Activated T-helper 1 cell treated with anti-CD3 and anti-CD28 coated beads, Interleukin-12 subunit alpha, Interleukin-12 subunit beta, Interleukin-2, Interleukin-4 antibody, amounts not matched to agents 30 ng/mL and 10 ng/mL and 1 ng/mL, durations not matched to agents 14 hours and 24 hours and 36 hours (primary cell): ENCODE measurements at regions of chr14 and their contacts with region 1.

Region 1: DNA sequence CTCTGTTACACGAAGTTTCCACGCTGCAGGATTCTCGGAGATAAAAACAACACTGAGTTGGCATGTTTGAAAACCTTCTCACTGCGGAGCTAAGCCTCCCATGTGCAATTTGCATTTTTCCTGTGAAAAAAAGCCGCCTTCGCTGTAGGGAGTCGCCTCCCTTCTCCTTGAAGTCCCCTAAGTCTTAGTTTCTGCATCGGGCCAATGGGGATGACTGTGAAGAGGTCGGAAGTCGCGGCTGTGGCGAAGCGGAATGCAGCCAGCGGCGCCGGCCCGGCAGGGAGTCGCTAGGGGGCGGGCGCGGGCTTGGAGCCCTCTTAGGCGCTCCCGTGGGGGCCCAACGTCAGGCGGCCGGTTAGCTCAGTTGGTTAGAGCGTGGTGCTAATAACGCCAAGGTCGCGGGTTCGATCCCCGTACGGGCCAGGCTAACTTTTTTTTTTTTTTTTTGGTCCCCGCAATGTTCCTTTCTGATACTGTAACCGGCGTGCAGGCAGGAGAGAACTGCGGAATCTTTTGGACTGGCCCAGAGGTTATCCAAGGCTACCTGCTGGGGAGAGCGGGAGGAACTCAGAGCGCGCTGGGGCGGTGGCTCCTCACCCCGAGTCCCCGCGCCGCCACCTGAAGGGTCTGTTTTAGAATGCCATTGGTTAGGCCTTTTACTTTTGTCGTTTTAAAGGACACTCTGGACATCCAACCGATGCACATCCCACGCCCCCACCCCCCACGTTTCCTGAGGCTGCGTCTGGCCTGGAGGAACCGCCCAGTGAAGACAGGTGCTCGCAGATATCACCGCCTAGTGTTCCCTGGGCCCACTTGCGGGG is 2.6 kb upstream of the ZNF839 start:
- DNase-seq: peak; percentile 94
- H3K4me3 Mint-ChIP-seq: peak overlapping the region; percentile 94
- H3K27ac Mint-ChIP-seq: peak overlapping the region; percentile 92
- H3K4me1 Mint-ChIP-seq: peaks cover 56% of the 10 kb centered on the region
- H3K27me3 Mint-ChIP-seq: peaks cover 3% of the 10 kb centered on the region

Region 2: DNA sequence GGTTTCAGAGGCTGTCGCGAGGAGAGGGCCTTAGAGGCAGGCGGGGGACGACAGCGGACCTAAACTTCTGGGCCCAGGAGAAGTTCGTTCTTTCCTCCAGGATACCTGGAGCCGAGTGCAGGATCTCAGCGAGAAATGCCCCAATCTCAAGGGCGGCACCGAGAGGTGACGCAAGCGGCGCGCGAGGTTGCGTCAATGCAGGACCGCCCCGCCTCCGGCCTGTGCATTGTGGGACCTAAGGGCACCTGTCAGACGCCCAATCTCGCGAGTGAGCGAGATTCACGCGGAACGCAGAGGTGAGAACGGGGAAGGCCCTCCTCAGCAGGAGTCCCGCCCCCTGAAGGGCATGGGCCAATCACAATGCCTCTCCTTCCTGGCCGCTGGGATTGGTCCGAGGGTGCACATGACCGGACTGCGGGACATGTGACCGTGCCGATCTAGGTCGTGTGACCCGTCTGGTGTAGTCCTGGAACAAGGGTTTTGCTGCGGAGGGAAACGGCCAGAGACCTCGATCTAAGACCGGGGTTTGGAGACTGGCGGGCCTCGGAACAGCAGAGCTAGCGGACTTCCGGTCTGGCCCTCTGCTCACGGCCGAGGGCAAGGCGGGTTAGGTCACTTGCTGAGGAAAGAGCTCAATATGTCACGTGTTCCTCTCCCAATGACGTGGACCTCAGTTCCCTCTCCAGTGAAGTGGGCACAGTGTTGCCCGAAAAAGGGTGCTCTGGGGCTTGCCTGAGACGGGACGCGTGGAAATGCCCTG is 368.9 kb before region 1 on chr14:
- intact Hi-C with region 1: loop called (anchors 1 kb)
- DNase-seq: peak; percentile 100
- H3K4me3 Mint-ChIP-seq: peak overlapping the region; percentile 97
- H3K27ac Mint-ChIP-seq: peak overlapping the region; percentile 97
- H3K4me1 Mint-ChIP-seq: peaks cover 12% of the 10 kb centered on the region
- H3K27me3 Mint-ChIP-seq: peaks cover 15% of the 10 kb centered on the region

Region 3: DNA sequence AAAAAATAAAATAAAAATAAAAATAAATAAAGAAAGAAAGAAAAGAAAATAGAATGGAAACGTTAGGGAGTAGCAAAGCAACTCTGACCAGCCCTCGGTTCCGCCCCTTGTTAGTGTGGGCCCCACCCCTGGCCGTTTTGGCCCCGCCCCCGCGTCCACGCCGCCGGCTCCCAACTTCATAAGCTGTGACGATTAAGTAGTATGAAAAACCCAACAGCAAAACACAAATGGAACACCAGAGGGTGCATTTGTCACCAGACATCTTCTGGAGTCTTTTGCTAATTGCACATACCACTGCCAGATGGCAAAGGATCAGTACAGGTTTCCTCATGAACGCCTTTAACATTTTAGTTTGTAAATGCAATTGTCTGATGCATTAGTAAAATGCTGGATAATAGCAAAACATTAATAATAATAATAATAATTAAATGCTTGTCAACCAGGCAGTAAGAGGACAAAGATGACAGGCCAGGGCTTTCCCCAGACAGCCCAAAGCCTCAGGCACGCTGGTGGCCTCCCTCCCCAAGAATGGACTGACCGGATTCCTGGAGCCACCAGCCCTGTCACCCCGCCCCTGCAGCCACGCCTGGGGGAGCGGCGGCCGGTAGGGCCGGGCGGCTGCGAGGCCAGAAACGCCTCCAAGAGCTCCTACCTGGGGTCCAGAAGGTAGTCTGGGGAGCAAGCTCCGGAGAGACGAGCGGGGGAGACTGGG is 253.7 kb before region 1 on chr14:
- intact Hi-C with region 1: loop called (anchors 1 kb)
- DNase-seq: peak; percentile 48
- H3K4me3 Mint-ChIP-seq: no peak overlapping the region
- H3K27ac Mint-ChIP-seq: no peak overlapping the region
- H3K4me1 Mint-ChIP-seq: no peaks in the 10 kb centered on the region
- H3K27me3 Mint-ChIP-seq: peaks cover 3% of the 10 kb centered on the region

Region 4: DNA sequence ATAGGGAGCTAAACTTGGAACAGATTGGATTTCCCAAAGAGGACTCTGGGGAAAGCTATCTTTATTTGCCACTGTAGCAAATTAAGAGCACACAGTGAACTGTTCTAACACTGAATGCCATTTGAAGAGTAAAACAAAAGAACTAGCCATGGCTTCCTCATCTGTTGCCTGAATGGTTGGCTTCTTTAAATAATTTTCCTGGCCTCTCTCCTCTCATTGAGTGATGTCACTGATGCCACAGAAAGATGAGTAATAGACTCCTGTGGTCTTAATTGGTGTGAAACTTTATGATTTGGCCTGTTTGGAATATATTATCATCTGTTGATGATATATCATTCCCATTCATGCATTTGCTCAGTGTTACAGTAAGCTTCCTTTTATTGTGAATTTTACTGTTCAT is 134.8 kb before region 1 on chr14:
- intact Hi-C with region 1: loop called (anchors 1 kb)
- DNase-seq: no peak
- H3K4me3 Mint-ChIP-seq: no peak overlapping the region
- H3K27ac Mint-ChIP-seq: peak overlapping the region; percentile 68
- H3K4me1 Mint-ChIP-seq: peaks cover 50% of the 10 kb centered on the region
- H3K27me3 Mint-ChIP-seq: no peaks in the 10 kb centered on the region

Region 5: DNA sequence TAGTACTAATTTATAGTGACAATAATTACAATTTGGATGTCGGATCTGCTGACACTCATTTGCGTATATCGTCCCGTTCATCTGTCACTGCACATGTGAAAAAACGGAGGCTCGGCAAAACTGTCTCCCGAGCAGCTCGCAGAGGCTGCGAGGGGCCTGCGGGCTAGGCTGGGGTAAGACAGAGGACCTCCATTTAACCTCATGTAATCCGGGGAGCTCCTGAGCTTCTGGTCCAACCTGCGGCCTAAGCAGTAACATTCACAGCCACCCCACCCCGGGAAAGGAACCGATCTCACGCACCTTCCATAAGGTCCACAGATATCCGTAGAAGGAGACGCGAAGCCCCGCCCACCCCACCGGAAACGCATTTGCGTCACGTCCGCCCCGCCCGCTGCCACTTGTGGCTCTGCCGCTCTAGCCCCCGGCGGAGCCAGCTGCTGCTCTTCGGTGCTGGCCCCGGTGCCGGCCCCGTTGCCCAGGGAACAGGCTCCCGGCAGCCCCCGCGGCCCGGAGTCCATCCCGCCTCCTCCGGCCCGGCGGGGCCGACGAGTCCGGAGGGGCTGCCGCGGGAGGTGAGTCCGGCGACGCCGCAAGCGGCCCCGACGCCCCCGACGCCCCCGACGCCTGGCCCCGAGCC is 45.7 kb after region 1 on chr14 and contains the starts of genes CINP and TECPR2:
- intact Hi-C with region 1: loop called (anchors 1 kb)
- DNase-seq: peak; percentile 92
- H3K4me3 Mint-ChIP-seq: peak within 1 kb of the TSS; percentile 93
- H3K27ac Mint-ChIP-seq: peak within 1 kb of the TSS; percentile 91
- H3K4me1 Mint-ChIP-seq: peaks cover 32% of the 10 kb centered on the region
- H3K27me3 Mint-ChIP-seq: no peaks in the 10 kb centered on the region
- total RNA-seq, gene CINP: 39.6 and 42.5 TPM in 2 replicates
- total RNA-seq, gene TECPR2: 9.5 and 10.1 TPM in 2 replicates

Region 6: DNA sequence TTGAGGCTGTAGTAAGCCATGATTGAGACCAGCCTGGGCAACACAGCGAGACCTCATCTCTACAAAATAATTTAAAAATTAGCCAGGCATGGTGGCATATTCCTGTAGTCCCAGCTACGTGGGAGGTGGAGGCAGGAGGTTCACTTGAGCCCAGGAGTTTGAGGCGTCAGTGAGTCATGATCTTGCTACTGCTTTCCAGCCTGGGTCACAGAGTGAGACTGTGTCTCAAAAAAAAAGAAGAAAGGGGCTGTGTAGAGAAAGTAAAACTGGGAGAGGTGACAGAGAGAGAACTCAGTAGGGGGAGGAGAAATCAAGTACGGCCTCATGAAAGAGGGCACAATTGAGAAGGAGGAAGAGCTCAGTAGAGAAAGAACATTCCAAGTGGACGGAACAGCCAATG is 58.2 kb after region 1 on chr14:
- intact Hi-C with region 1: no loop called
- DNase-seq: no peak
- H3K4me3 Mint-ChIP-seq: no peak overlapping the region
- H3K27ac Mint-ChIP-seq: peak overlapping the region; percentile 24
- H3K4me1 Mint-ChIP-seq: peaks cover 41% of the 10 kb centered on the region
- H3K27me3 Mint-ChIP-seq: no peaks in the 10 kb centered on the region